ENCODE measurements at regions of chr13 and their contacts with region 1.

Region 1: GRCh38 chr13:27826379-27827353 is 34.4 kb downstream of the GSX1 start:
- DNase-seq: peak; percentile 90
- H3K4me3 Mint-ChIP-seq: peak overlapping the region; percentile 3
- H3K27ac Mint-ChIP-seq: no peak overlapping the region
- H3K4me1 Mint-ChIP-seq: peaks cover 8% of the 10 kb centered on the region
- H3K27me3 Mint-ChIP-seq: peaks cover 76% of the 10 kb centered on the region

Region 2: GRCh38 chr13:27362064-27362883 is 464.4 kb before region 1 on chr13:
- intact Hi-C with region 1: loop called (anchors 1 kb)
- DNase-seq: peak; percentile 94
- H3K4me3 Mint-ChIP-seq: peak overlapping the region; percentile 53
- H3K27ac Mint-ChIP-seq: no peak overlapping the region
- H3K4me1 Mint-ChIP-seq: peaks cover 2% of the 10 kb centered on the region
- H3K27me3 Mint-ChIP-seq: peaks cover 39% of the 10 kb centered on the region

Region 3: GRCh38 chr13:27481766-27482165 is 344.9 kb before region 1 on chr13:
- intact Hi-C with region 1: loop called (anchors 2 kb)
- DNase-seq: peak; percentile 80
- H3K4me3 Mint-ChIP-seq: no peak overlapping the region
- H3K27ac Mint-ChIP-seq: no peak overlapping the region
- H3K4me1 Mint-ChIP-seq: peaks cover 16% of the 10 kb centered on the region
- H3K27me3 Mint-ChIP-seq: no peaks in the 10 kb centered on the region

Region 4: DNA sequence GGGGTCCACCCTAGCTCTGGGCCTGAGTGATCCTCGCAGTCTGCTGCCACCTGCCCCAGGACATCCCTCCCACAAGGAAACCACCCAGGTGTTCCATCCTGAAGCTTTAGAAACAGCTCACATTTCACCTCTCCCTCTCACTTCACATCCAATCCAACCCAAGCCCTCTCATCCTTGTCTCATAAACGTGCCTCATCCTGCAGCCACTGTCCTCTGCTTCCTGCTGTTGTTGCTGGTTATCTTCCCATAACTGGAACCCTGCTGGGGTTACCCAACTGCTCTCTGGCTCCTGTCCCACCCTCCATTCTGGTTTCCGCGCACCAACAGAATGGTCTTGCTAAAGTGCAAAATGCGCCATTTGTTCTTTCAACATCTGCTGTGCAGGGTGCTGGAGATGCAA is 316.6 kb before region 1 on chr13:
- intact Hi-C with region 1: no loop called
- DNase-seq: no peak
- H3K4me3 Mint-ChIP-seq: no peak overlapping the region
- H3K27ac Mint-ChIP-seq: no peak overlapping the region
- H3K4me1 Mint-ChIP-seq: no peaks in the 10 kb centered on the region
- H3K27me3 Mint-ChIP-seq: no peaks in the 10 kb centered on the region

Region 5: DNA sequence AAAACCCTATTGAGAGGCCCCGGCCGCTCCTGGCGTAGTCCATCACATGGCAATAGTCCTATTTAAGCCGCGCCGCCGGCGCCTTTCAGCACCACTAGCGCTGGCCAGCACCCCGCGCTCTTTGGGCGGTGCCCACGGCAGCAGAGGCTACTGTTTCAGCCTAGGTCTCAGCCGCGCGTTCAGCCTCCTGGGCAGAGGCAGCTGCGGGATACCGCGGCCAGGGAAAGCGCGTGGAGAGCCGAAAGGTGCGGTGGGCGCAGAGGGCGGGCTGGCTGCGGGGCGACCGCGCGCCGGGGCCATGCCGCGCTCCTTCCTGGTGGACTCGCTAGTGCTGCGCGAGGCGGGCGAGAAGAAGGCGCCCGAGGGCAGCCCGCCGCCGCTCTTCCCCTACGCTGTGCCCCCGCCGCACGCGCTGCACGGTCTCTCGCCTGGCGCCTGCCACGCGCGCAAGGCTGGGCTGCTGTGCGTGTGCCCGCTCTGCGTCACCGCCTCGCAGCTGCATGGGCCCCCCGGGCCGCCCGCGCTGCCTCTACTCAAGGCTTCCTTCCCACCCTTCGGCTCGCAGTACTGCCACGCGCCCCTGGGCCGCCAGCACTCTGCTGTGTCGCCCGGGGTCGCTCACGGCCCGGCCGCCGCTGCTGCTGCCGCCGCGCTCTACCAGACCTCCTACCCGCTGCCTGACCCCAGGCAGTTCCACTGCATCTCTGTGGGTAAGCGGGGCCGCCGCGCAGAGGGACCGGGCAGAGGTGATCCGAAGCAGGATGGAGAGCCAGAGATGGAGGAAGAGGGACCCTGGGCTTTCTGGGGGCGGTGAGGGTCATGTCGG is 34.1 kb before region 1 on chr13 and contains the start of gene GSX1:
- intact Hi-C with region 1: loop called (anchors 2 kb)
- DNase-seq: peak; percentile 83
- H3K4me3 Mint-ChIP-seq: peak within 1 kb of the TSS; percentile 76
- H3K27ac Mint-ChIP-seq: peak within 1 kb of the TSS; percentile 46
- H3K4me1 Mint-ChIP-seq: peaks cover 21% of the 10 kb centered on the region
- H3K27me3 Mint-ChIP-seq: peaks cover 76% of the 10 kb centered on the region
- total RNA-seq, gene GSX1: not detected in 2 replicates